ENCODE measurements at regions of chr4 and their contacts with region 1.

Region 1: GRCh38 chr4:183602557-183603027 is 56.4 kb downstream of the RWDD4 start:
- DNase-seq: no peak
- H3K4me3 ChIP-seq: no peak overlapping the region
- H3K27ac ChIP-seq: no peak overlapping the region
- H3K4me1 ChIP-seq: no peaks in the 10 kb centered on the region
- H3K27me3 ChIP-seq: peaks cover 0 to 10% (median 0%) of the 10 kb centered on the region in 7 donors
- CTCF ChIP-seq: peak in 3 of 11 experiments; percentile 12 to 17 (median 15)
- POLR2A ChIP-seq: no peak

Region 2: GRCh38 chr4:183471946-183472708 is 130.5 kb before region 1 on chr4:
- intact Hi-C with region 1: loop called (anchors 10 kb)
- DNase-seq: peak; percentile 89
- H3K4me3 ChIP-seq: no peak overlapping the region
- H3K27ac ChIP-seq: peak overlapping the region in 1 of 8 donors; percentile 10
- H3K4me1 ChIP-seq: peaks cover 0 to 12% (median 0%) of the 10 kb centered on the region in 6 donors
- H3K27me3 ChIP-seq: no peaks in the 10 kb centered on the region
- CTCF ChIP-seq: peak; percentile 73 to 93 (median 88)
- POLR2A ChIP-seq: no peak

Measured in spleen (tissue), 13 donors.